Activated CD4-positive, alpha-beta T cell treated with anti-CD3 and anti-CD28 coated beads for 36 hours (primary cell): ENCODE measurements at regions of chr9 and their contacts with region 1.

Region 1: GRCh38 chr9:129610473-129611301 is 10.2 kb downstream of the C9orf50 start:
- DNase-seq: peak; percentile 85
- ATAC-seq: peak; percentile 63
- H3K4me3 Mint-ChIP-seq: peak overlapping the region; percentile 73
- H3K27ac Mint-ChIP-seq: peak overlapping the region; percentile 47
- H3K4me1 Mint-ChIP-seq: peaks cover 29% of the 10 kb centered on the region
- H3K27me3 Mint-ChIP-seq: no peaks in the 10 kb centered on the region

Region 2: GRCh38 chr9:129131300-129132145 is 479.2 kb before region 1 on chr9:
- CTCF ChIA-PET with region 1: interaction called, 8 read pairs
- POLR2A ChIA-PET with region 1: no interaction called
- intact Hi-C with region 1: loop called (anchors 2 kb)
- DNase-seq: peak; percentile 91
- ATAC-seq: peak; percentile 100
- H3K4me3 Mint-ChIP-seq: no peak overlapping the region
- H3K27ac Mint-ChIP-seq: no peak overlapping the region
- H3K4me1 Mint-ChIP-seq: peaks cover 6% of the 10 kb centered on the region
- H3K27me3 Mint-ChIP-seq: no peaks in the 10 kb centered on the region

Region 3: GRCh38 chr9:129320575-129321263 is 290.0 kb before region 1 on chr9:
- CTCF ChIA-PET with region 1: interaction called, 3 read pairs
- POLR2A ChIA-PET with region 1: no interaction called
- intact Hi-C with region 1: loop called (anchors 1 to 2 kb)
- DNase-seq: peak; percentile 71
- ATAC-seq: peak; percentile 84
- H3K4me3 Mint-ChIP-seq: peak overlapping the region; percentile 62
- H3K27ac Mint-ChIP-seq: peak overlapping the region; percentile 78
- H3K4me1 Mint-ChIP-seq: peaks cover 24% of the 10 kb centered on the region
- H3K27me3 Mint-ChIP-seq: no peaks in the 10 kb centered on the region

Region 4: GRCh38 chr9:129383561-129384416 is 226.9 kb before region 1 on chr9:
- CTCF ChIA-PET with region 1: interaction called, 3 read pairs
- POLR2A ChIA-PET with region 1: no interaction called
- intact Hi-C with region 1: loop called in 1 of 2 experiments (anchors 2 kb)
- DNase-seq: peak; percentile 83
- ATAC-seq: peak; percentile 96
- H3K4me3 Mint-ChIP-seq: peak overlapping the region; percentile 59
- H3K27ac Mint-ChIP-seq: peak overlapping the region; percentile 58
- H3K4me1 Mint-ChIP-seq: peaks cover 8% of the 10 kb centered on the region
- H3K27me3 Mint-ChIP-seq: no peaks in the 10 kb centered on the region

Region 5: GRCh38 chr9:129460323-129461261 is 150.1 kb before region 1 on chr9:
- CTCF ChIA-PET with region 1: no interaction called
- POLR2A ChIA-PET with region 1: no interaction called
- intact Hi-C with region 1: loop called in 1 of 2 experiments (anchors 1 kb)
- DNase-seq: peak; percentile 96
- ATAC-seq: peak; percentile 87
- H3K4me3 Mint-ChIP-seq: peak overlapping the region; percentile 72
- H3K27ac Mint-ChIP-seq: peak overlapping the region; percentile 92
- H3K4me1 Mint-ChIP-seq: peaks cover 38% of the 10 kb centered on the region
- H3K27me3 Mint-ChIP-seq: no peaks in the 10 kb centered on the region

Region 6: DNA sequence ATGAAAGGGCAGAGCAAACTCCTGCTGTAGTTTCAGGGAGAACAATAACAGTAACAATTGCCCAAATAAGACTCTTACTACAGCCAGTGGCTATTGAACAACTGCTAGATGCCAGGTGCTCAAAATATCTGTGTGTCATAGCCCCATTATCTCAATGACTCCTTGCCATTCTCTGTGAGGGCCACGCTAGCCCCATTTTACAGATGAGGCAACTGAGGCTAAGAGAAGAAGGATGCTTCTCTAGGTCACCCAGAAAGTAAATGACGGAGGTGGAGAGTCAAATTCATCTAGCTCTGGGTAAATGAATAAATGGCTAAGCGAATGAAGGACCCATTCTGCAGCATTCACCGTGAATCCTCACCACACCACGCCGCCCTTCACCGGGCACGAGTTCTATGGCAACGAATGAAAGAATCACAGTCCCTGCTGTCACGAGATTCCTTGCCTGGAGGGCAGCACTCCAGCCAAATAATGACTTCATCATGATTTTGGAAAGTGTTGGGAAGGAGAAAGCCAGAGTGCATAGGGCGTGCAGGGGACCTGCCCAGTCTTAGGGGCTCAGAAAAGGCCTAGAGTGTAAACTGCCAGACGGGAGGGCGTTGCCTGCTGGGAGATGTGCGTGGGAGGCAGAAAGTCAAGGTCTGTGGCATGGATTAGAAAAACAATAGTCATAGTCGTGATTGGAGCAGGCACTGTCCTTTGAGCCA is 137.0 kb before region 1 on chr9:
- CTCF ChIA-PET with region 1: no interaction called
- POLR2A ChIA-PET with region 1: no interaction called
- intact Hi-C with region 1: no loop called
- DNase-seq: no peak
- ATAC-seq: no peak
- H3K4me3 Mint-ChIP-seq: no peak overlapping the region
- H3K27ac Mint-ChIP-seq: no peak overlapping the region
- H3K4me1 Mint-ChIP-seq: peaks cover 19% of the 10 kb centered on the region
- H3K27me3 Mint-ChIP-seq: no peaks in the 10 kb centered on the region

Region 7: GRCh38 chr9:129495534-129496325 is 115.0 kb before region 1 on chr9:
- CTCF ChIA-PET with region 1: interaction called, 5 read pairs
- POLR2A ChIA-PET with region 1: no interaction called
- intact Hi-C with region 1: loop called in 1 of 2 experiments (anchors 10 kb)
- DNase-seq: peak; percentile 92
- ATAC-seq: peak; percentile 86
- H3K4me3 Mint-ChIP-seq: peak overlapping the region; percentile 74
- H3K27ac Mint-ChIP-seq: peak overlapping the region; percentile 67
- H3K4me1 Mint-ChIP-seq: peaks cover 33% of the 10 kb centered on the region
- H3K27me3 Mint-ChIP-seq: no peaks in the 10 kb centered on the region

Region 8: DNA sequence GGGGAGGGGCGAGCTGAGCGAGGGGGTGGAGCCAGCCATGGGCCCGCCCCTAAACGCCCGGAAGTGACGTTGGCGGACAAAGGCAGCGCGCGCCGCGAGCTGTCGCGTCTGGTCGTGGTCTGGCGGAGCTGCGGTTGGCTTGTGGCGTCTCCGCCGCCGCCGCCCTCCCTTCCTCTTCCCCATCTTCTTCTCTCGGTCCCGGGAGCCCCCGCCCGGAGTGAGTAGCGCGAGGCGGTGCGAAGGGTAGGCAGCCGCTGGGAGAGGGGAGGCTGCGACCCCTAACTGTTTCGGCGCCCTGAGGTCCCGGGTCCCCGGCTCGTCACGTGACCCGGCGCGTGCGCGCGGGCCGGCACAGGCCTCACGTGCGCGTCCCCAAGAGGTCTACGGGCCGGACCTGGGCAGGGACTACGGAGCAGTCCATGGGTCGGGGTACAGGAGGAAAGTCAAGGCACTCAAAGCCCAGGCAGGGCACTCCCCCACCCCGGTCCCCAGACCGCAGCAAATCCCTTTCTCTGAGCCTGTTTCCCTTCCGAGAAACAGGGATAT is 15.5 kb after region 1 on chr9 and contains the start of gene NTMT1:
- CTCF ChIA-PET with region 1: interaction called, 12 read pairs
- POLR2A ChIA-PET with region 1: interaction called, 3 read pairs
- intact Hi-C with region 1: loop called (anchors 1 kb)
- DNase-seq: peak; percentile 95
- ATAC-seq: peak; percentile 76
- H3K4me3 Mint-ChIP-seq: peak within 1 kb of the TSS; percentile 77
- H3K27ac Mint-ChIP-seq: peak within 1 kb of the TSS; percentile 93
- H3K4me1 Mint-ChIP-seq: peaks cover 52% of the 10 kb centered on the region
- H3K27me3 Mint-ChIP-seq: peaks cover 4% of the 10 kb centered on the region
- total RNA-seq, gene NTMT1: 50.1 to 69.2 TPM

Region 9: DNA sequence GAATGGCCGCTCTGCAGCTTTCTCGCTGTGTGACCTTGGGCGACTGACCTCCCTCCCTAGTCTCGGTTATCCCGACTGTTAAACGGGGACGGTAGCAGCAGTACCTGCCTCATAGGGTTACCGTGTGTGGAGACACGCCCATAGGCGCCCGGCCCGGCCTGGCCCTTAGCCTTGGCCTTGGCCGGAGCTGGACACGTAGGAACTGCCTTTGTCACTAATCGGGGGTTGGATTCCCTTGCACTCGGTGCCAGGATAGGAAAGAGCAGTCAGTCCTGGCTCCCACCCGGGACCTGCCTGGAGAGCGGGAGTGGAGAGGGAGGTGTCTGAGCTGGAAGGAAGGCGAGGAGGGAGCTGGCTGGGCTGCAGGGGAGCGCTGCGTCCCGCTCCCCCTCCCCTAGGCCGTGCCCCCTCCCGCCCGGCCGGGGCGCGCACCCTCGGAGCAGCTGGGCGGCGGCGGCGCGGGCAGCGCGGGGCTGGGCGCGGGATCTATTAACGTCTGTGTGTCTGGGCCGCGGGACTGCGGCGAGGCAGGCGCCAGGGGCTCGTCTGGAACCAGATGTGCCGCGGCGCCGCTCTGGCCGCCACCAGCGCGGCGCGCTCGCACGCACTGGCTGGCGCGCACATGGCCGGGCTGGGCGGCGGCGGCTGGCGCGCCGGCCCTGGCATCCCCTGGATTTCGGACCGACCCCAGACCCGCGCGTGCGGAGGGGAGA is 86.4 kb after region 1 on chr9:
- CTCF ChIA-PET with region 1: no interaction called
- POLR2A ChIA-PET with region 1: no interaction called
- intact Hi-C with region 1: no loop called
- DNase-seq: peak; percentile 51
- ATAC-seq: peak; percentile 59
- H3K4me3 Mint-ChIP-seq: peak overlapping the region; percentile 62
- H3K27ac Mint-ChIP-seq: peak overlapping the region; percentile 86
- H3K4me1 Mint-ChIP-seq: peaks cover 10% of the 10 kb centered on the region
- H3K27me3 Mint-ChIP-seq: peaks cover 28% of the 10 kb centered on the region